WTC11 (cell line): ENCODE measurements at regions of chr16 and their contacts with region 1.

Region 1: DNA sequence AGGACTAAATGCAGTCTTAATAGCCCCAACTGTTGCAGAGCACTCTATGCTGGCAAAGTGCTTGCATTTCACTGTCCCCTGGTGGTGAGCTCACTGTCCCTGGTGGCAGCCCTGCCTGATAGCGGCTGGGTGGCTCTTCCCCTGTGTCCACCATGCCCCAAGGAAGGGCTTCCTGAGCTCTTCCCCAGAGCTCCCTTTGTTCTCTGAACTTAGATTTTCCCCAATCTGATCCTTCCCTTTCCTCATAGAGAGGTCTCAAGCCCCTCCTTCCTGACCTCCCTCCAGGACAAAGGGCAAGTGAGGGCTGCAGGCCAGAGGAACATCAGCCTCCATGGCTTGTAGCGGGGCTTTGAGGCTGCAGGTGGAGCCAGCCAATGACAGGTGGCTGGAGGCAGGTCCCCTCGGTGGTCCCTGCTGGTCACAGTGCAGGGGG is 17.0 kb downstream of the BEAN1 start:
- DNase-seq: no peak
- ATAC-seq: peak; percentile 81
- H3K4me3 Mint-ChIP-seq: no peak overlapping the region
- H3K27ac Mint-ChIP-seq: no peak overlapping the region
- H3K4me1 Mint-ChIP-seq: peaks cover 6% of the 10 kb centered on the region
- H3K27me3 Mint-ChIP-seq: peaks cover 9% of the 10 kb centered on the region; the same call in 1 of the 2 replicates
- CTCF ChIP-seq: no peak

Region 2: DNA sequence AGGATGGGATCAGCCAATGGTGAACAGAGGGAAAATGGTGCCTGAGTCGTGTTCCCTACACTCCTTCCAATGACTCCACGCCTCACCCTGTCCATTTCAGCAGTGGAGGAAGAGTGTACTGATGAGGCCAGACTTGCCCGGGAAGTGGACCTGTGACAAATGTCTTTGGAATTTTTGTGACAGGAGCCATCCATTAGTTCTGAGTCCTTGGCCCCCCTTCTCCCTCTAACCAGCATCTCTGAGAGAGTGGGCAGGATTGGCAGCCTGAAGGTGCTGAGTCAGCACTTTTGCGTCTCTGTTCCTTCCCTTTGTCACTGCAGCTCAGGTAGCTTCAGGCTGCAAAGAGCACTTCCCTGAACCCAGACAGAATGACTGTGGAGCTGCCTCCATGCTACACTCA is 13.8 kb after region 1 on chr16:
- CTCF ChIA-PET with region 1: interaction called, 13 read pairs
- POLR2A ChIA-PET with region 1: no interaction called
- DNase-seq: no peak
- ATAC-seq: no peak
- H3K4me3 Mint-ChIP-seq: no peak overlapping the region
- H3K27ac Mint-ChIP-seq: no peak overlapping the region
- H3K4me1 Mint-ChIP-seq: peaks cover 18% of the 10 kb centered on the region
- H3K27me3 Mint-ChIP-seq: peaks cover 7% of the 10 kb centered on the region
- CTCF ChIP-seq: no peak